ENCODE measurements at regions of chr4 and their contacts with region 1.

Region 1: DNA sequence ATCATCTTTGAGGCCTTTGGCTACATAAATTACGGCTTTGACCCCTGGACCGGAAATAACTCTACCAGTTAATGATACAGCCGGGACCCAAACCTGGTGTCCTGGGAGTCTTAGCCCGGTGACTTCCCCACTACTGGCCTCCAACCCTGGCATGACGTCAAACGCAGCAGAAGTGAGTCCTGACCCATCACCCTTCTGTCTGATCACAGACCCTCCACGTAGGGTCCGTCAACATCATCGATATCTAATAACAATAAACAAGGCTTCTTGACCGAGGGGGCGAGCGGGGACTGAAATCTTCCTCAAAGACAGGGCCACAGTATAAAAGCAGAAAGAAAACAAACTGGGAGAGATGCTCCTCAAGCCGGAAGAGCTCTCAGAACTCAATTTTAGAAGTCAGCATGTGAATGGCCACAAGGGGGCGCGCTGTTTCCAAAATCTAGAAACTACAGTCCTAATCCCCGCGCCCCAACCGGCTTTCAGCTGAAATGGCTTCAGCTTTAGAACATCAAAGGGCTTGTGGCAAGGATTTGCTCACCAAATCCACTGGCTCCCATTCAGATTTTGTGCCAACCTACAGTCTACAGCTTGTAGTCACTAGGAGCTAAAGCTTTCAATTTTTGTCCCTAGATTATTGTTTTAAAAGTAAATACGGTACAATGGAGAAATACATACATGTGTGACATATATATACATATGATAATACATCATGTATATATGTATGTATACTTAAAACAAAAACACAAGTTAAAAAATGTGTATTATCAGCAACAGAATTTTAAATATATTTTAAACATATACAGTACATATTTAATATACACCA is 46.4 kb upstream of the ENPP6 start:
- DNase-seq: peak; percentile 97
- H3K4me3 Mint-ChIP-seq: no peak overlapping the region
- H3K27ac Mint-ChIP-seq: peak overlapping the region; percentile 62
- H3K4me1 Mint-ChIP-seq: peaks cover 45% of the 10 kb centered on the region
- H3K27me3 Mint-ChIP-seq: peaks cover 19% of the 10 kb centered on the region

Region 2: DNA sequence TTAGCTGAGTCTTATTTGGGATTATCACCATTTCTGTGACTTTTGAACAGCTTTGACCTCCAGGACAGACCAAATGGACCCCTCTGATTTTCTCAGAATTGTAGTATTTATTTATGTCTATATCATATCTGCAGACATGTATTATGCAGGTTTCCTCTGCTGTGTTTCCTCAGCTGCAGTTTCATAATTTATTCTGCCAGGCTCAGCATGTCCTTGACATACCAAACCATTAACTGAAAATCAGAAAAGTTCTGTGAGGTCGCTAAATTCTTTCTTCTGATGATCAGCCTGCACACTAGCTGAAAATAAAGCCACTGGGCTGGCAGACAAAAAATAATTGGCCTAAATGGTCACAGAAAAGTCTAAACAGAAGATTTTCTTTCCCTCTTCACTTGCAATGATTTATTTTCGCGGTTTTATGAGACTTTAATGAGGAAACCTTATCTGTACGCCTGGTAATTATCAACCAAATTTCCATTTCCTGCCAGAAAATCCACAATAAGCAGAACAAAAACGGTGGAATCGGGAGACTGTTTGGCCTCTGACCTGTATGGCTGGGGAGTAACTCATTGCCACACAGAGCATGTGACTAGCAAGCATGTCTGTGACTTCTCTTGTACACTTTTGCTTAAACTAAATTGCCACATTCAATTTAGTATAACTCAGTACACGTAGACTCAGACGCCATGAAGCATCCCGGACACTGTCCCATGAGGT is 197.4 kb before region 1 on chr4:
- CTCF ChIA-PET with region 1: no interaction called
- DNase-seq: no peak
- H3K4me3 Mint-ChIP-seq: no peak overlapping the region
- H3K27ac Mint-ChIP-seq: no peak overlapping the region
- H3K4me1 Mint-ChIP-seq: no peaks in the 10 kb centered on the region
- H3K27me3 Mint-ChIP-seq: peaks cover 11% of the 10 kb centered on the region

Region 3: GRCh38 chr4:184143770-184144564 is 120.2 kb before region 1 on chr4:
- CTCF ChIA-PET with region 1: no interaction called
- DNase-seq: no peak
- H3K4me3 Mint-ChIP-seq: no peak overlapping the region
- H3K27ac Mint-ChIP-seq: no peak overlapping the region
- H3K4me1 Mint-ChIP-seq: peaks cover 11% of the 10 kb centered on the region
- H3K27me3 Mint-ChIP-seq: peaks cover 33% of the 10 kb centered on the region

Region 4: DNA sequence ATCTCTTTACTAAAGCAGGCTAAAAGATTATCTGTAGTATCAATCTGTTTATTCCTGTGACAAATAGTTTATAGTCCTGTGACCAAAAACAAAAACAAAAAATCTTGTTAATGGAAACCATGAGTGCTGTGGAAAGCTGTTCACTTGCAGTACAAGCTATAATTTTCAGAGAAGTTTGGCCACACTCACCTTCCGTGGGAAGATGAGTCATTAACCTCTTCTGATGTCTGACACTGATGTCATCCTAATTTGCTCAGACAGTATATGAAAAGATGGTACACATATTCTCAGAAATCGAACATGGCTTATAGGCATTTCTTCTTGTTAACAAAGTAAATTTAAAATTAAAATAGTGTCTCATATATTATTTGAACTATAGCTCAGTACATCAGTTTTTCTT is 26.5 kb before region 1 on chr4:
- CTCF ChIA-PET with region 1: interaction called, 16 read pairs
- DNase-seq: peak; percentile 64
- H3K4me3 Mint-ChIP-seq: peak overlapping the region; percentile 7
- H3K27ac Mint-ChIP-seq: peak overlapping the region; percentile 90
- H3K4me1 Mint-ChIP-seq: peaks cover 37% of the 10 kb centered on the region
- H3K27me3 Mint-ChIP-seq: no peaks in the 10 kb centered on the region

Region 5: DNA sequence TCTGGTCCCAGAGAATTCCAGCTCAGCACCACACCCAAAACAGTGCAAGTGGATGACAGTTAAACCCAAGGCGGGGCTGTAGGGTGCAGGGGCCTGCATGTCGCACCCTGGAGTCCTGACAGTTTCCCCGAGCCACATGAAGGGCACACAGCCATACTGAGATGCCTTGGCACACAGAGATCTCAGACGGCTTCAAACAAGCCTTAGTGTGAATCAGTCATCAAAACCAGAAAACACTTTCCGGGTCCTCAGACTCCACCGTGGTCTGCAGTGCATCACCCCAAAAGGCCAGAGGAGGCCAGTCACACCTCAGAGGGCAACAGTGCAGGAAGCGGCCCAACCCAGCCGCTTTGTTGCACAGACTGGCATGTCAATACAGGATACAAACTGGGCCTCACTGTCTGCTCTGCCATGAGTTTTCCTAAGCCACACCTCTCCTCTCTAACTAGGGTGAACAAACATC is 18.2 kb after region 1 on chr4:
- CTCF ChIA-PET with region 1: interaction called, 115 read pairs
- DNase-seq: peak; percentile 58
- H3K4me3 Mint-ChIP-seq: no peak overlapping the region
- H3K27ac Mint-ChIP-seq: peak overlapping the region; percentile 76
- H3K4me1 Mint-ChIP-seq: peaks cover 50% of the 10 kb centered on the region
- H3K27me3 Mint-ChIP-seq: no peaks in the 10 kb centered on the region

Region 6: GRCh38 chr4:184310171-184310567 is 46.0 kb after region 1 on chr4:
- CTCF ChIA-PET with region 1: interaction called, 26 read pairs
- DNase-seq: peak; percentile 70
- H3K4me3 Mint-ChIP-seq: no peak overlapping the region
- H3K27ac Mint-ChIP-seq: peak overlapping the region; percentile 80
- H3K4me1 Mint-ChIP-seq: peaks cover 59% of the 10 kb centered on the region
- H3K27me3 Mint-ChIP-seq: no peaks in the 10 kb centered on the region

Region 7: DNA sequence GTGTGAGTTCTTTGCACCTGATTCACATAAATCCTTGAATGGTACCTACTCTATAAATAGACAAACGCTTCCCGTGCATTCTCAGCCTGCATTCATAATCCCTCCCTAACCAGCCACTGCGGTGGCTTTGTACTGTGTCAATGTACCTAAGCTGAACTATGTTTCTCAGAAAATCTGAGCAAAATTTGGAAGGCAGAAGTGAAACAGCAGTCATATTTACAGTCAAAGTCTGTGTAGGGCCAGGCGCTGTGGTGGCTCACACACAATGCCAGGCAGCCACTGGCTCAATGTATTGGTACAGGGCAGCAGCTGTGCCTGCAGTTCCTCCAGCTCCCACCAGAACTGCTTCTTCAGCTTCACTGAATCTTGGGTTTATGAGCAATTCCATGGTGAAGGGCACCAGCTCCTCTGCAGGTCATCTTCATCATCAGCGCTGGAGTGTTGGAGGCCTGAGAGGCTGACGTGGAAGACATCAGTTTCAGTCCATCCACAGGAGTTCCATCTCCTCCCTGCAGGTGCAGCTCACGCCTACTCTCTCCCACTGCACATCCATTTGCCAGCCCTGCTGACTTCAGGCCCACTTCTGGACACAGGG is 242.5 kb after region 1 on chr4:
- CTCF ChIA-PET with region 1: interaction called, 10 read pairs
- DNase-seq: peak; percentile 66
- H3K4me3 Mint-ChIP-seq: no peak overlapping the region
- H3K27ac Mint-ChIP-seq: peak overlapping the region; percentile 53
- H3K4me1 Mint-ChIP-seq: peaks cover 36% of the 10 kb centered on the region
- H3K27me3 Mint-ChIP-seq: no peaks in the 10 kb centered on the region

Region 8: GRCh38 chr4:184538023-184538599 is 274.0 kb after region 1 on chr4:
- CTCF ChIA-PET with region 1: interaction called, 49 read pairs
- DNase-seq: peak; percentile 73
- H3K4me3 Mint-ChIP-seq: peak overlapping the region; percentile 87
- H3K27ac Mint-ChIP-seq: peak overlapping the region; percentile 89
- H3K4me1 Mint-ChIP-seq: peaks cover 47% of the 10 kb centered on the region
- H3K27me3 Mint-ChIP-seq: no peaks in the 10 kb centered on the region

Region 9: DNA sequence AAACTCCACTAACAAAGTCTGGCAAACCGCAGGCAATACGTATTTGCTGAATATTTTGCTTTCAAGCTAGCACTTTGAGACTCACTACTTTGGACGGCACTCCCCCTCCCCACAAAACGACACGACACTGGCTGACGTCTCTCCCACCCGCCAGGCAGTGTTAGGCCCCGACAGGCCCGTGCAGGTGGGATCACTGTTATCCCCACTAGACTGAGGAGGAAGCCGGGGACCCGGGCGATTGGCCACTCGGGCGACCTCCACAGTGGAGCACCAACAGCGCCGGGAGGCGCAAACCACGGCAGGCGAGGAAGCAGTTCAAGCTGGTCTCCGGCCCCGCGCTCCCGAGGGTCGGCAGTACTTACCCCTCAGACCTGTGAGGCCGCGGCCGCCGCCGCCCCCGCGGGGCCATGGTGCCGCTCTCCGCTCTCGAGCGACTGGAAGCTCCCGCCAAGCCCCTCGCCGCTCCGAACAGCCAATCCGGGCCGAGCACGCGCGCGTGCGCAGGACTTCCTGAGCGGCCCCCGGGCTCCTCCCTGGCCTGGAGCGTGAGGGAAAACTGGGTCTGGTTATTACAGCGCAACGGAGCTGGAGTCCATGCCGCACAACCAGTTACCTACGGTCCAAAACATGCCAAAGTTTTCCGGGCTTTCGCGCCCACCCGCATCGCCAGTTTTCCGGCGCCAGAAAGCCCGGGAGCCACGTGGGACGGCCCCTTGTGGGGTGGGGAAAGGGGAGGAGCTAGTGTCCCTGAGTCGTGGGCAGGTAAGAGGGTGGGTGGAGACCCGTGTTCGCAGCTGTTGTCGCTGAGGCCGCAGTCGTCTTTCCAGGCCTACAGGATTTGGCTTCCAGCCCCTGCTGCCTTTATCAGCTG is 469.8 kb after region 1 on chr4 and contains the start of gene CENPU:
- CTCF ChIA-PET with region 1: interaction called, 11 read pairs
- DNase-seq: peak; percentile 97
- H3K4me3 Mint-ChIP-seq: peak within 1 kb of the TSS; percentile 96
- H3K27ac Mint-ChIP-seq: peak within 1 kb of the TSS; percentile 96
- H3K4me1 Mint-ChIP-seq: peaks cover 50% of the 10 kb centered on the region
- H3K27me3 Mint-ChIP-seq: no peaks in the 10 kb centered on the region